Activated naive CD4-positive, alpha-beta T cell treated with anti-CD3 and anti-CD28 coated beads for 36 hours (primary cell): ENCODE measurements at regions of chr4 and their contacts with region 1.

Region 1: DNA sequence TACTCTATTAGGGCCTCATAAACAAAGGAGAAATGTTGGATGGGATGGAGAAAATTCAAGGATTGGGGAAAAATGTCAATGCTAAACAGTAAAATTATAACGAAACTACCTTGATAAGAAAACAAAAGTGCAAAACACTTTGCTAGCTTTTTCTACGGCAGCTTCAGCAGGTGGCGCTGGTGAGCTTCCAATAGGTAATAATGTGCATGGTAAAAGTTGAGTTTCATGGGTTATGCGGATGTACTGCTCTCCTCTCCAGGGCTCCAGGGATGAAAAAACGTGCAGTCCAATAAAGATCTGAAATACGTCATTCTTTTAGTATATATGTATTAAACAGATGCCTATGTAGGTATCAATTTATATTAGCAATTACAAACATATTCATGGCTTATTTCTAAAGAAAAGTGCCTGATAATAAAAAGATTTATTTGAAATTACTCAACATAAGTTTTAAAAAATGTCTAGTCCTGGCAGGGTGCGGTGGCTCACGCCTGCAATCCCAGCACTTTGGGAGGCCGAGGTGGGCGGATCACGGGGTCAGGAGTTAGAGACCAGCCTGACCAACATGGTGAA is 239.6 kb downstream of the GRXCR1 start:
- DNase-seq: peak; percentile 72
- H3K4me3 Mint-ChIP-seq: no peak overlapping the region
- H3K27ac Mint-ChIP-seq: no peak overlapping the region
- H3K4me1 Mint-ChIP-seq: no peaks in the 10 kb centered on the region
- H3K27me3 Mint-ChIP-seq: no peaks in the 10 kb centered on the region

Region 2: DNA sequence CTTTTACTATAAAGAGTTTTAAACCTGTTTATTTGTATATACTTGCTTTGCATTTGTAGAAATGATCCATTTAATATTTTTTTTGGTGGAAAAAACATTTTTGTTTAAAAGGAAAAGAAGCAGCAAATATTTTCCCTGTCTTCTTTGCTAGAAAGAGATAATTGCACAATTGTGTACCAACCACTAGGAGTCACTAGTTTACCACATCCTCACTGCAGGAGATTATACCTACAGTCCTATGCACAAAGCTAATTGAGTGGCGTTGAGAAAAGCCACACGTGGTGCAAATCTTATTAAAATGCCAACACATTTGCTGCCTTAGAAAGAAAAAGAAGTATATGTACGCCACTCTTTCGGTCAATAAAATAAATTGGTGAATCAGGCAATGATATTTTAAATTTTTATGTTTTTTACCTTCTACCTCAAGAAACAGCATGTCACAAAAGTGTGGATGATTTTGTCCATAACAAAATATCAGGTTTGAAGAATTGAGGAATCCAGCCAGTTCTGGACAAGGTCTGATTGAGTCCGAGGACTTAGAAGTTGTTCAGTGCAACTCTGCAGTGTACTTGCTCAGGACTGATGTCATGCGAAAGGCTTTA is 136.7 kb before region 1 on chr4:
- CTCF ChIA-PET with region 1: no interaction called
- intact Hi-C with region 1: loop called (anchors 5 kb)
- DNase-seq: no peak
- H3K4me3 Mint-ChIP-seq: no peak overlapping the region
- H3K27ac Mint-ChIP-seq: no peak overlapping the region
- H3K4me1 Mint-ChIP-seq: no peaks in the 10 kb centered on the region
- H3K27me3 Mint-ChIP-seq: no peaks in the 10 kb centered on the region

Region 3: DNA sequence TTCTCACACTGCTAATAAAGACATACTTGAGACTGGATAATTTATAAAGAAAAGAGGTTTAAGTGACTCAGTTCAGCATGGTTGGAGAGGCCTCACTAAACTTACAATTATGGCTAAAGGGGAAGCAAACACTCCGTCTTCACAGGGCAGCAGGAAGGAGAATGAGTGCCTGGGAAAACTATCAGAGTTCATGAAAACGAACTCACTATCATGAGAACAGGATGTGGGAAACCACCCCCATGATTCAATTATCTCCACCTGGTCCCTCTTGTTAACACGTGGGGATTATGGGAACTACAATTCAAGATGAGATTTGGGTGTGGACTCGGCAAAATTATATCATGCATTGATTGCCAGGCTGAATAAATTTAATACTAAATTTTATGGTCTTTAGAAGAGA is 353.1 kb after region 1 on chr4:
- CTCF ChIA-PET with region 1: no interaction called
- intact Hi-C with region 1: loop called (anchors 10 kb)
- DNase-seq: no peak
- H3K4me3 Mint-ChIP-seq: no peak overlapping the region
- H3K27ac Mint-ChIP-seq: no peak overlapping the region
- H3K4me1 Mint-ChIP-seq: no peaks in the 10 kb centered on the region
- H3K27me3 Mint-ChIP-seq: no peaks in the 10 kb centered on the region

Region 4: GRCh38 chr4:43776371-43776770 is 644.3 kb after region 1 on chr4:
- CTCF ChIA-PET with region 1: no interaction called
- intact Hi-C with region 1: loop called (anchors 10 kb)
- DNase-seq: no peak
- H3K4me3 Mint-ChIP-seq: no peak overlapping the region
- H3K27ac Mint-ChIP-seq: no peak overlapping the region
- H3K4me1 Mint-ChIP-seq: no peaks in the 10 kb centered on the region
- H3K27me3 Mint-ChIP-seq: no peaks in the 10 kb centered on the region

Region 5: GRCh38 chr4:44448548-44449461 is 1316.7 kb after region 1 on chr4 and contains the start of gene KCTD8:
- CTCF ChIA-PET with region 1: no interaction called
- intact Hi-C with region 1: loop called (anchors 5 kb)
- DNase-seq: peak; percentile 74
- H3K4me3 Mint-ChIP-seq: peak within 1 kb of the TSS; percentile 62
- H3K27ac Mint-ChIP-seq: no peak within 1 kb of the TSS
- H3K4me1 Mint-ChIP-seq: peaks cover 17% of the 10 kb centered on the region
- H3K27me3 Mint-ChIP-seq: peaks cover 54% of the 10 kb centered on the region
- total RNA-seq, gene KCTD8: not detected

Region 6: DNA sequence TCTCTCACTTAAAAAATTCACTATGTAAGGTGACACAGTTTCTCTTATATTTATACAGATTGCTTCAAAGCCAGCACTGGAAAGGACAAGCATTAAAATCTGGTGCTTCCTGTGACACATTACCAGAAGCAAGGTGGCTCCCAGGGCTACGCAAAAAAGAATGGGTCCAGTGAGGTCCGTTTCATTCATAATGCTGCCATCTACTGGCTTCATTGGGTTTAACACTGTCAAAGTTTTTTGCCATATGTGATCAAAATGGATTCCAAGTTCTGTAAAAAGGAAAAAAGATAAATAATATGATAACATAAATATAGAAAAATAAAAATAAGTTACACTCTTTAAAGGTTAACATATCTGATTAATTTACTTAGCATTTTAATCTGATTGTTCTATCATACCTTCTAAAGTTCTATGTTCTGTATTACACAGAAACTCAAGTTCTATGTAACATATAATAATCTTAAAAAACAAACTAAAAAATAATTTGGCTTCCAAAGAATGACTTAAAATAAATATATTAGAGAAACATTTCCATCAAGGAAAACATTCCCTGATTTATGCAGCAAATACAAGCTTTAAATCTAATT is 1497.3 kb after region 1 on chr4:
- CTCF ChIA-PET with region 1: no interaction called
- intact Hi-C with region 1: loop called (anchors 1 kb)
- DNase-seq: peak; percentile 63
- H3K4me3 Mint-ChIP-seq: no peak overlapping the region
- H3K27ac Mint-ChIP-seq: no peak overlapping the region
- H3K4me1 Mint-ChIP-seq: peaks cover 2% of the 10 kb centered on the region
- H3K27me3 Mint-ChIP-seq: peaks cover 2% of the 10 kb centered on the region